OCI-LY7 (cell line): ENCODE measurements at regions of chr9 and their contacts with region 1.

Region 1: DNA sequence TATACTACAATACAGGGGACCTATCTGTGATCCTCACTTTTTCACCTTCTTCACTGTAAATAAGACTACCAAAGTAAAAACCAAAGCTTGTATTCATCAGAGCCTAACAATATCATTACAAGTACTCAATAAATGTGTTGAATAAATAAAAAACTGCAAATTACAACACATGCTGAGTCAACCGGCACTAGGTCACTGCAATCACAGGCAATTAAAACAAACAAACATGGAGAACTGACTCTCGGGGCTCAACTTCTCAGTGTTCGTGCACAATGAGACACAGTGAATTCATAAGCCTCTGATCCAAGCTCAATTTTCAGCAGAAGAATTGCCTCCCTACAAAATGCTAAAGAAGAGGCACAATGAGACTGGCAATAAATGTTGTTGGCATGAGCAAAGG is 69.2 kb downstream of the CDK5RAP2 start:
- DNase-seq: no peak
- H3K4me3 ChIP-seq: no peak overlapping the region
- H3K27ac ChIP-seq: no peak overlapping the region
- H3K4me1 ChIP-seq: no peaks in the 10 kb centered on the region
- CTCF ChIP-seq: no peak

Region 2: DNA sequence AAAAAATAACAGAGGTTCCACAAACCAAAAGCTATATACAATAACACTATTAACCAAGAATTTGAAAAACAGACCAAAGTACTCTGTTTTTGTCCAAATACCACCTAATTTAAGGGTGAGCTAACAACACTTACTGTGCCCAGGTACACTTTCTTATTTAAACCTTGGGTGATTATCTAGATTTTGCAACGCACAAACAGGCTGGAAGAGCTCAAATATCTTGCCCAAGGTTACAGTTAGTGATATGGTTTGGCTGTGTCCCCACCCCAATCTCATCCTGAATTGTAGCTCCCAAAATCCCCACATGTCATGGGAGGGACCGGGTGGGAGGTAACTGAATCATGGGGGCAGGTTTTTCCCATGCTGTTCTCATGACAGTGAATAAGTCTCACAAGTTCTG is 10.3 kb after region 1 on chr9:
- CTCF ChIA-PET with region 1: no interaction called
- POLR2A ChIA-PET with region 1: interaction called, 11 read pairs
- intact Hi-C with region 1: no loop called
- DNase-seq: no peak
- H3K4me3 ChIP-seq: no peak overlapping the region
- H3K27ac ChIP-seq: no peak overlapping the region
- H3K4me1 ChIP-seq: no peaks in the 10 kb centered on the region
- CTCF ChIP-seq: no peak

Region 3: DNA sequence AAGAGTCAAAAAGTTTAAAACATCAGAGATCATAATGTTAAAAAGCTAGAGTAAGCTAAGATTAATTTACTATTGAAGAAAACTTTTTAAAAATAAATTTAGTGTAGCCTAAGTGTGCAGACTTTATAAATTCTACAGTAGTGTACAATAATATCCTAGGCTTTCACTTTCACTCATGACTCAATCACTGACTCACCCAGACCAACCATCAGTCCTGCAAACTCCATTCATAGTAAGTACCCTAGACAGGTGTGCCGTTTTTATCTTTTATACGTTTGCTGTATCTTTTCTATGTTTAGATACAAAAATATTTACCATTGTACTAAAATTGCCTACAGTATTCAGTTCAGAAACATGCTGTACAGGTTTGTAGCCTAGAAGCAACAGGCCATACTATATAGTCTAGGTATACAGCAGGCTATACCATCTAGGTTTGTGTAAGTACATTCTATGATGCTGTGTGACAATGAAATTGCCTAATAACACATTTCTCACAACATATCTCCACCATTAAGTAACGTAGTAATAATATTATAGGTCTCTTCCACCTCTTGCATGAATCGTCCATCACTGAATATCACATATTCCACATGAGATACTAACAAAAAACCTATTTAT is 144.3 kb after region 1 on chr9:
- CTCF ChIA-PET with region 1: no interaction called
- POLR2A ChIA-PET with region 1: no interaction called
- intact Hi-C with region 1: no loop called
- DNase-seq: no peak
- H3K4me3 ChIP-seq: no peak overlapping the region
- H3K27ac ChIP-seq: no peak overlapping the region
- H3K4me1 ChIP-seq: no peaks in the 10 kb centered on the region
- CTCF ChIP-seq: no peak